ENCODE measurements at regions of chr1 and their contacts with region 1.

Region 1: DNA sequence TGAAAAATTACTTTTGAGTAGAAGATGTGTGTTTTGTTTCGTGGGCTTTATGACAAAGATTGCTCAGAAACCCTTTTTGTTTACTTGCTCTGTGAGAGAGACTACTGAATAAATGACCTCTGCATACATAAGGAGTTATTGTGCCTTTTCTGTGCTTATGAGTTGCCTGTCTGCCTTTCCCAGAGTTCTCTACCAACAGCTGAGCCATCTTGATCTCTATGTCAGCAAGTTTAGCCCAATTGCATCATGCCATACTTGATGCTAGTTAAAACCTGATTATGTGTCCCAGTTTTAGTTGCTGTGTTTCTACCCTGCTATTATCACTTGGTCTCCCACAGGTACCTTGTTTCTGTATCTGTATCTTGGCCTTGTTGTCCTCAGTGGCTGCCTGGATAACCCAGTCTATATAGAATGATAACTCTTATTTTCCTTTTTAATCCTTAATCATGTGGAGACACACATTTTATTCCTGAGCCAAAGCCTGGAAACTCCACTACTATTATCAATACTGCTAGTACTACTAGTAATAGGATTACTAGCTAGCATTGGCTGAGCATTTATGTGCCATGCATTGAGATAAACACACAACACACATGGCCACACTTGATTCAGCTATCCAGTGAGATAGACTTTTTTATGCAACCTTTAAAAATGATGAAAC is 28.7 kb upstream of the GNG12 start:
- DNase-seq: no peak
- ATAC-seq: no peak
- H3K4me3 ChIP-seq: no peak overlapping the region
- H3K27ac ChIP-seq: no peak overlapping the region
- H3K4me1 ChIP-seq: peaks cover 0 to 12% (median 0%) of the 10 kb centered on the region in 9 donors
- H3K27me3 ChIP-seq: no peaks in the 10 kb centered on the region
- CTCF ChIP-seq: no peak

Region 2: GRCh38 chr1:67991546-67991945 is 129.6 kb after region 1 on chr1:
- intact Hi-C with region 1: loop called in 1 of 10 experiments (anchors 10 kb)
- DNase-seq: no peak
- ATAC-seq: no peak
- H3K4me3 ChIP-seq: no peak overlapping the region
- H3K27ac ChIP-seq: no peak overlapping the region
- H3K4me1 ChIP-seq: no peaks in the 10 kb centered on the region
- H3K27me3 ChIP-seq: no peaks in the 10 kb centered on the region
- CTCF ChIP-seq: no peak